Cardiac septum (tissue), 1 donor: ENCODE measurements at regions of chr11 and their contacts with region 1.

Region 1: GRCh38 chr11:506238-506994 is 626 bp downstream of the RNH1 start:
- DNase-seq: peak; percentile 98

Region 2: GRCh38 chr11:236774-237767 is 269.3 kb before region 1 on chr11 and contains the start of gene PSMD13:
- intact Hi-C with region 1: loop called (anchors 10 kb)
- DNase-seq: peak; percentile 96
- total RNA-seq, gene PSMD13: 87.5 TPM

Region 3: GRCh38 chr11:406978-407739 is 99.3 kb before region 1 on chr11:
- intact Hi-C with region 1: loop called (anchors 5 kb)
- DNase-seq: peak; percentile 88

Region 4: DNA sequence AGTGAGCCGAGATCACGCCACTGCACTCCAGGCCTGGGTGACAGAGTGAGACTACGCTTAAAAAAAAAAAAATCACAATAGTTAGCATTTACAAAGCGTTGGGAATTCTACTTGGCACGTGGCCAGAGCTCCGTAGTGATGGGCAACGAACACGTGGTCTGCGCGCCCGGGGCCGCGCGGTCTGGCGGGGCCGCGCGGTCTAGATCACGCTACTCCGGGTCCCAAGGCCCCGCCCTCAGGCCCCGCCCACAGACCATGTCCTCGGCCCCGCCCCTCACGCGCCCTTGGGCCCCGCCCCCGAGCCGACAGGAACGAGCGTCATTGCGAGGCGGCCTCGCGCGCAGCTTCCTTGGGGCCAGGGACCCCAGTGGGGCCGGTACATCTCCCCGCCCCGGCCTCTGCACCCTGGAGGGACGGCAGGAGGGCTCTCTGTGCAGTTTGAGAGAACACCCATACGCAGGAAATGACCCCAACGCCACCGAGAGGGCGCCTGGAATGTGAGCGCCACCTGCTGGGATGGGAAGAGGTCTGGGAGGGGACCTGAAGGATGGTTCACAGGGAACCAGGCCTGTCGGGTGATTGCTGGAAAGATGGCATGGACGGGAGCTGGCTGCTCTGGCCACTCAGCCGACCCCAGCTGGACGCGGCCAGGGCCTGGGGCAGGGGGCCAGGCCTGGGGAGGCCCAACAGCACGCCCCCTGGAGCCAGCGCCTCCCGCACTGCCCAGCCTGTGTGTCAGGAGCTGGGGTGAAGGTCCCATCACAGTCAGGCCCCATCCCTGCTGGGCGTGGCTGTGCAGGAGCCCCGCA is 58.3 kb before region 1 on chr11:
- intact Hi-C with region 1: loop called (anchors 2 kb)
- DNase-seq: peak; percentile 96

Region 5: DNA sequence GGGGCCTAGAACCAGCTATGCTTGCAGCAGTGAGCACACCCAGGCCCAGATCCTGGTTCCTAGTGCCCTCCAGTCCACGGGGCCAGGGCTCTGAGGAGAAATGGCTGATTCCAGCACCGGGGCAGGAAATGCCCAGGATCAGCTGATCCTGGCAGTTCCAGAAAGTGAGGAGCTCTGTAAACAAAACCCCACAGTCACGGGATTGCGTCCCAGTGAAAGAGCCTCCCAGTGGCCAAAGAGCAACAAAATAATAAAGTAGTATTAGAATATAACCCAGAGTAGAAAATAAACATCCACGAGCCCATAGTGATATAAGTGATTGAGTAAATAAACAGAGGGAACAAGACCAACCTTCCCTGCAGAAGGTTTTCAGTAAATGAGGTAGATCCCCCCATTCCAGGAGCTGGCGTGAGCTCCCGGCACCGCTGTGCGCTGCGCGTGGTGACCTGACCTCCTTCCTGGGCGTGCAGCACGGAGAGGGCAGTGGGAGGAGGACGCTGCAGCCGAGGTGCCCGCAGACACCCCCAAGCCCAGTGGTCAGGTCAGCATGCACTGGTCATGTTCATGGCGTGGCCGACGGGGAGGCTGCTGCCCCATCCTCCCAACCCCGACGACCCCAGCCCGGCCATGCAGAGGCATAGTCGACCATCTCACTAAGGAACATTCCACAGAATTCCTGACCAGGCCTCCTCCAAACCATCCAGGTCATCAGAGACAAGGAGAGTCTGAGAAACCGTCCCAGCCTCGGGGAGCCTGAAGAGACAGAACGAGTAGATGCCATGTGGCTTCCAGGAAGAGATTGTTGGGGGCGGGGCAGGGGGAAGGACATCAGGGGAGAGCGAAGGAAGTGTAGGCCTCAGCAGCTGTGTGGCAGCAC is 36.5 kb before region 1 on chr11:
- intact Hi-C with region 1: loop called (anchors 5 kb)
- DNase-seq: no peak